ENCODE measurements at regions of chr22 and their contacts with region 1.

Region 1: GRCh38 chr22:46563381-46564083 is 26.1 kb upstream of the CELSR1 start:
- DNase-seq: peak; percentile 91
- ATAC-seq: peak; percentile 92

Region 2: GRCh38 chr22:46531776-46532175 is 31.8 kb before region 1 on chr22:
- intact Hi-C with region 1: loop called (anchors 2 kb)
- DNase-seq: no peak
- ATAC-seq: no peak

Region 3: DNA sequence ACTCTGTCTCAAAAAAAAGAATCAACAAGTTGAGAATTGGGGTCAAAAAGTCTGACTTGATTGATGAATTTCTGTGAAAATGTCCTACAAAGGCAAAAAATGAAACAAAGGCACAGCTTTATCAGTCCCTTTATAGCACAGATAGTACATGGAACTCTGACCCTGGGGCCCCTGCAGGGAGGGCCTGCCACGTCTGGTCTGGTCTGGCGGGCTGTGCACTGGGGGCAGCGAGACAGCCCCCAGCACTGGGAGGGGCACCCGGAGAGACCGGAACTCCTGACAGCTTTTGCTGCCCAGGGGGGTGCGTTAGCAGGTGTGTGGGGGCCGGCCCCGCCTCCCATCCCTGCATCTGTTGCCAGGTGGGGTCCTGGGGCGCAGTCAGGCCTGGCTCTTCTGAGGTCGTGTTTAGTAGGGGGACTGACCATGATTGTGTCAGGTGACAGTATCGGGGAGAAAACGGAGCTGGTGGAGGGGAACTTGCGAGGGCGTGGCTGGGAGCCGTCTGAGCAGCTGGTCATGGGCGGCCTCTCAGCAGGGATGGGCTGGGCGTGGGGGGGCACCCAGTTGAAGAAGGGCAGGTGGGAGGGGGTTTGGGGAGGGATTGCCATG is 108.4 kb after region 1 on chr22:
- intact Hi-C with region 1: loop called (anchors 2 kb)
- DNase-seq: no peak
- ATAC-seq: no peak

Measured in Right ventricle myocardium inferior (tissue), 1 donor.